A673 (cell line): ENCODE measurements at regions of chr11 and their contacts with region 1.

Region 1: DNA sequence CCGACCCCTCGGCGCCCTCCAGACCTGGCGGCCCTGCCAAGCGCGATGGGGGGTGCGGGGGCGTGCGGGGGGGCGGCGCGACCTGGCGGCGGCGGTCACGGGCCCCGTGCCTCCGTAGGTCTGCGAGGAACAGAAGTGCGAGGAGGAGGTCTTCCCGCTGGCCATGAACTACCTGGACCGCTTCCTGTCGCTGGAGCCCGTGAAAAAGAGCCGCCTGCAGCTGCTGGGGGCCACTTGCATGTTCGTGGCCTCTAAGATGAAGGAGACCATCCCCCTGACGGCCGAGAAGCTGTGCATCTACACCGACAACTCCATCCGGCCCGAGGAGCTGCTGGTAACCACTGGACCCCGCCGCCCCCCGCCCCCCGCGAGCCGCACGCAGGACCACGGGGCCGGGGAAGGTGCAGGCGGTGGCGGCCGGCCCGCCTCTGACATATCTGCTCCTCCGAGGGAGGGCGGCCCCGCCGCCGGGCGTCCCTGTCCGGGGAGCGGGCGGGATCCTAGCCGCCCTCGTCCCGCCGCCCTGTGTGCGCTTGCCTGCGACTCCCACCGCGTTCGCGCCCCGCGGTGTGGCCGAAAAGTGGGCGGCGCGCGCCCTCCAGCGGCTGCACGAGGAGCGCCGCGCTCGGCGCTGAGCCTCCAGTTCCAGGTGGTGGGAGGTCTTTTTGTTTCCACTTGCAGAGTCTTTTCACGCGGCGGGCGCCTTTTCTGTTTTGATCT is 2.1 kb downstream of the CCND1 start:
- DNase-seq: peak; percentile 92
- H3K4me3 ChIP-seq: peak overlapping the region; percentile 86
- H3K27ac ChIP-seq: peak overlapping the region; percentile 99
- H3K4me1 ChIP-seq: peaks cover 30% of the 10 kb centered on the region
- H3K27me3 ChIP-seq: no peaks in the 10 kb centered on the region
- CTCF ChIP-seq: peak; percentile 82

Region 2: DNA sequence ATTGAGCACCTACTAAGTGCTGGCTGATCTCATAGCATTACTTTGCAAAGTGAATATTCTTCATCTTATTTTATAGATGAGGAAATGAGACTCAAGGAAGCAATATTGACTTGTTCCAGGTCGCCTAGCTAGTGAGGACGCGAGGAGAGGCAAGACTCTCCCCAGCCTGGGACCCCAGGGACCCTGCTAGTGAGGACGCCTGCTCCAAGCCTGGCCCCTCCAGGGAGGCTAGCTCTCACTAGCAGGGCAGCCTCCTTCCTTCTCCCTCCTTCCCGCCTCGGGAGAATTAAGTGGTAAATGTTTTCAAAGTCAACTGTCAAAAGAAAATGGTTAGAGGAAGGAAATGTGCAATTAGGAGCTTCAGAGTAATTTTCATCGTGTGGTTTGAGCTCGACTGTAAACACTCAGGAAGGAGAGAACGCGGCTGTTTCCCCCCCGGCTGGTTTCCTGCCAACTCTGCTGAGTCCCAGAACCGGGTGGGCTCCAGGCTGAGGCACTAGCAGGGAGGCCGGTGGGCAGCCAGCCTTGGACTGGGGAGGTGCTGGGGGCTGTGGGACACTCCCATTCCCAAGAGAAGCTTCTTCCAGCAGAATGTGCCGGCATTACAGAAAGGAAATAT is 331.2 kb before region 1 on chr11:
- CTCF ChIA-PET with region 1: no interaction called
- POLR2A ChIA-PET with region 1: interaction called, 4 read pairs
- intact Hi-C with region 1: loop called (anchors 5 kb)
- DNase-seq: peak; percentile 100
- H3K4me3 ChIP-seq: no peak overlapping the region
- H3K27ac ChIP-seq: peak overlapping the region; percentile 94
- H3K4me1 ChIP-seq: peaks cover 76% of the 10 kb centered on the region
- H3K27me3 ChIP-seq: no peaks in the 10 kb centered on the region
- CTCF ChIP-seq: no peak

Region 3: DNA sequence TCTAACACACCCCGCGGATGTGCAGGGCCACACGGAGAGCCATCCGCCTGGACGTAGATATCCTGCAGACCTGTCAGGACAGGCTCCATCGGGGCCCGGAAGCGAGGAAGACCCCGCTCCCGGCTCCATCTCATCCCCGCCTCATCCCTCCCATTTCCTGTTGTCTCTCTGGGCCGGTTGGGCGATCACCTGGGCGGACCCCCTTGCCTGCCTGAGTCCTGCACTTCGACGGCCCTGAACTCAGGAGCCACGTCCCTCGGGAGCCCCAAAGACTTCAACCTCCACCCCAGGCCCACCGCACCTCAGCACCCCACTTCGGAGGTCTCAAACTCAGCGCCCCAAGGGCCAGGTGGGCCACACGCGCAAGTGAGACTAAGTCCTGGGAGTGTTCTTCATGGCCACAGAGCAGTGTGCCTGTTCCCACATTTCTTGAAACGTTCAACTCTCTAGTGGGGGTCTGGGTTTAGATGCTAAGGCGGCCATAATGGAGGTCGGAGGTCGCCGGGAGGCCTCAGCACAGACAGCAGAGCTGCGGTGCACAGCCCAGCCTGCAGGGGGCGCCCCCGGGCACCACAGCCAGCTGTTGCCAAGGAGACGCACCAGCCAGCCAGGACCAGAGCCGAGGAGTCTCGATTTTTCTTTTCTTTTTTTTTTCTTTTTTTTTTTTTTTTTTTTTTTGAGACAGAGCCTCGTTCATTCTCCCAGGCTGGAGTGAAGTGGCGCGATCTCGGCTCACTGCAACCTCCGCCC is 534.0 kb after region 1 on chr11:
- CTCF ChIA-PET with region 1: no interaction called
- POLR2A ChIA-PET with region 1: no interaction called
- intact Hi-C with region 1: no loop called
- DNase-seq: peak; percentile 61
- H3K4me3 ChIP-seq: no peak overlapping the region
- H3K27ac ChIP-seq: no peak overlapping the region
- H3K4me1 ChIP-seq: no peaks in the 10 kb centered on the region
- H3K27me3 ChIP-seq: no peaks in the 10 kb centered on the region
- CTCF ChIP-seq: peak; percentile 84